ENCODE measurements at regions of chr22 and their contacts with region 1.

Region 1: GRCh38 chr22:37817705-37818408 is 5.3 kb upstream of the GALR3 start:
- DNase-seq: peak; percentile 90
- ATAC-seq: peak; percentile 95

Region 2: DNA sequence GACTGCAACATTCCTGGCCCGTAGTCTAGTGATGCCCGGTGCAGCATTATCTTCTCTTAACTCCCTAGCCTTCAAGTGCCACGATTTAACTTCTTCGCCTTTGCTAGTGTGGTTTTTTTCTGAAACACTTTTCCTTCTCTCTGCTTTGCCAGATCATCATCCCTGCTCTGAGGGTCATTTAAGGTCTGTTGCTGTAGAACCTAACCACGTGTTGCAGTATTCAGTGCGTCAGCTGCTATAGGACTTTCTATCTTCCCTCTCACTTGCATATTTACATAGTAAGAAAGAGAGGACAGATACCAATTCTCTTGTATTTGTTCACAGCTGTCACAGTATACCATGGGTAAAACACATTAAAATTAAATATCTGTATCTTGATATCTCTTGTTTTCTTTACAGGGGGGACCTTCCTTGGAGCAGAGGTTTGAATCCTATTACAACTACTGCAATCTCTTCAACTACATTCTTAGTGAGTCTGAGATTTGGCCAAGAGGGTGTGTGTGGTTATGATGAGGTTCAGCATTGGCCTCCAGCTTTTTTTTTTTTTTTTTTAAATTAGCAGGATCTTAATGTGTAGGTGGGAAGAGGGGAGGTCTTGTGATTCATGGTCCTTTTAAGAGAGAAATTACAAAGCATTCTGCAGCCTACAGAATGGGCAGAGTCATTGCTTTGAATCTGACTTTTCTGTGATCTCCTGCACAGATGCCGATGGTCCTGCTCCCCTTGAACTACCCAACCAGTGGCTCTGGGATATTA is 44.9 kb after region 1 on chr22:
- intact Hi-C with region 1: loop called (anchors 1 kb)
- DNase-seq: no peak
- ATAC-seq: peak; percentile 59

Region 3: DNA sequence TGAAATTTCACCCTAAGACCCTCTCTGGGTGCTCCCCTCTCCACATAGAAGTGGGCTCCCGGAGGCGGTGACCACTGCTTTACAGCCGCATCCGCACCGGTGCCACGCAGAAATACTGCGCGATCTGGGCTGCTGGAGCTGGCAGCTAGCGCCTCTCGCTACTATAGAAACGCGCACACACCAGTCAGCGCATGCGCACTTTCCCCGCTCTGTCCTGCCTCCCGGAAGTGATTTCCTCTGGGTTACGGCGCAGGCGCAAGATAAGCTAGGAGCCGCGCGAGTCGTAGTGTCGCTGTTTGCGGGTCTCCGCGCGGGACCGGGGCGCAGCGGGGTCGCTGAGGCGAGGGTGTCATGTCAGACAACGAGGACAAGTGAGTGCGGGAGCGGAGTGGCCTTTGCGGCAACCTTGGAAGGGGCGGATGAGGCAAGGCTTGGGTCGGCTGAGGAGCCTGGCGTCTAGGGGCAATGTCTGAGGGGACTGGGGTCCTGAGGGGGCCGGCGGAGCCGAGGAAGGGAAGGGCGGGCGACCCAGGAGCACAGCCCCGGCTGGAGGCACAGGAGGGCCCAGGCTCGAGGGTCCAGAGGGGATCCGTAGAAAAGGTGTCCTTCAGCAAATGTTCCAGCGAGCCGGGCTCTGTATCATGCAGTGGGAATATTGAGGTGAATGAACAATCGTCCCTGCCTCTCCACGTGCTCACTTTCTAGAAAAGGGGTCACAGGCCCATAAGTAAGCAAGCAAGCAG is 135.8 kb after region 1 on chr22 and contains the starts of genes C22orf23 and POLR2F:
- intact Hi-C with region 1: no loop called
- DNase-seq: peak; percentile 99
- ATAC-seq: peak; percentile 99
- total RNA-seq, gene C22orf23: 0.30 TPM
- total RNA-seq, gene POLR2F: 85.7 TPM

Region 4: GRCh38 chr22:37965940-37966664 is 148.2 kb after region 1 on chr22:
- intact Hi-C with region 1: loop called (anchors 5 kb)
- DNase-seq: no peak
- ATAC-seq: peak; percentile 50